IMR-90 (cell line): ENCODE measurements at regions of chr1 and their contacts with region 1.

Region 1: GRCh38 chr1:118247593-118247992 is 62.6 kb upstream of the SPAG17 start:
- DNase-seq: peak; percentile 10
- ATAC-seq: peak; percentile 64; the same call in 1 of the 2 replicates
- H3K4me3 ChIP-seq: no peak overlapping the region
- H3K27ac ChIP-seq: no peak overlapping the region
- H3K4me1 ChIP-seq: no peaks in the 10 kb centered on the region
- H3K27me3 ChIP-seq: no peaks in the 10 kb centered on the region; the same call in 1 of the 2 replicates
- CTCF ChIP-seq: peak; percentile 47
- POLR2A ChIP-seq: no peak
- RAD21 ChIP-seq: peak; percentile 38

Region 2: DNA sequence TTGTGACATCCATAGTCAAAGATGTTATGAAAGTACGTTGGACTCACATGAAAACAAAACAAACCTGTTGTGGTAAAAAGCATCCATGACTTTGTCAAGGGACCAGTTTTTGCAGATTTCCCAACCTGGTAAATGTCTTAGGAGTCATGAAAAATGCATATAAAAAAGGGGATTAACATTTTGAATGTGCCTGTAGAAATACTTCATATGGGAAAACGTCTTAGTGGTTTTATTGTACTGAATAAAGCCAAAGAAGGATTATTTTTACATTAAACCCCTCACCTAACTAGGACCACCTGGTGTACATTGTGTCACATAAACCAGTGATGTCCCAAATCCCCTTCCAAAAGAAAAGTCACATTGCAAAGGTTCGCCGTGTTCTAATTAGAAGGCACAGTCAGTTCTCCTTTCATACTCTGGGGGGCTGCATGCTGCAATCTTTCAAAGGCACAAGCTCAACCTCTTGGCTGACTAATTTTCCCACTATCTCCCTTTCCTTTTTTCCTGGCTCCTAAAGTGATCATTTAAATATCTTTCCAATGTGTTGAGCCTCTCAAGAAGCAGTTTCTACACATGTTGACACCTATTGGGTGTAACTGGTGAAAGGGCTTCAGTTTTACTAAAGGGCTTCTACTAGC is 57.2 kb after region 1 on chr1:
- CTCF ChIA-PET with region 1: no interaction called
- POLR2A ChIA-PET with region 1: no interaction called
- dilution Hi-C with region 1: no loop called
- in situ Hi-C with region 1: no loop called
- intact Hi-C with region 1: loop called (anchors 10 kb)
- DNase-seq: no peak
- ATAC-seq: no peak
- H3K4me3 ChIP-seq: no peak overlapping the region
- H3K27ac ChIP-seq: no peak overlapping the region
- H3K4me1 ChIP-seq: no peaks in the 10 kb centered on the region
- H3K27me3 ChIP-seq: no peaks in the 10 kb centered on the region
- CTCF ChIP-seq: no peak; the same call in 1 of the 2 replicates
- POLR2A ChIP-seq: no peak
- RAD21 ChIP-seq: peak; percentile 18; the same call in 1 of the 2 replicates

Region 3: GRCh38 chr1:118346936-118347335 is 99.3 kb after region 1 on chr1:
- CTCF ChIA-PET with region 1: no interaction called
- POLR2A ChIA-PET with region 1: no interaction called
- dilution Hi-C with region 1: no loop called
- in situ Hi-C with region 1: no loop called
- intact Hi-C with region 1: no loop called
- DNase-seq: no peak
- ATAC-seq: no peak
- H3K4me3 ChIP-seq: no peak overlapping the region
- H3K27ac ChIP-seq: no peak overlapping the region
- H3K4me1 ChIP-seq: no peaks in the 10 kb centered on the region
- H3K27me3 ChIP-seq: no peaks in the 10 kb centered on the region
- CTCF ChIP-seq: no peak
- POLR2A ChIP-seq: no peak
- RAD21 ChIP-seq: no peak